ENCODE measurements at regions of chr7 and their contacts with region 1.

Region 1: DNA sequence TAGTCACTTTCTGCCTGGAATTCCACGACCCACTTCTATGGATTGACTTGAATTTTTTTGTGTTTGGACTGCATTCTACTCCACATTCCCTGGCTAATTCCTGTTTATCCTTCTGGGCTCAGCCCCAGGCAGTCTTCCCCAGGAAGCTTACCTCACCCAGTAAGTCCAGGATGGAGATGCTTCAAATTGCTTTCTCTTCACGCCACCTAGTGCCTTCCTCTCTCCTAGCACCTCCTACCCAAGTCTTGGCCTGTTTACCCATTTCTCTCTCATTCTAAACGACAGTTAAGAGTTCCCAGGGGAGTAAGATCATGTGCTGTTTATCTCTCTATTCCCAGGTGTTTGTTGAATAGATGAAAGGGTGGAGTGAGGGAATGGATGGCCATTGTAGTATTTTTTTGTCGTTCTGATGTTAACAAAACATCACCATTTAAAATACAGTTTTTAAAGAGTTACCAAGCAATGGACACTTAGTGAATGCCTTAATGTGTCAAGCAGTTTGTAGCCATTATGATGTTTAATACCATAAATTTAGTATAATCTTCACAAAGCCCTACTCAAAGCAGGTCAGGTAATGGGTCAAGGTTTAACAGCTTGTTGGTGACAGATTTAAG is 45.5 kb upstream of the TARP start:
- DNase-seq: peak; percentile 74
- H3K4me3 ChIP-seq: no peak overlapping the region
- H3K27ac ChIP-seq: no peak overlapping the region
- H3K4me1 ChIP-seq: no peaks in the 10 kb centered on the region
- H3K27me3 ChIP-seq: peaks cover 0 to 1% of the 10 kb centered on the region in 2 experiments
- CTCF ChIP-seq: peak; percentile 64 to 67
- POLR2A ChIP-seq: no peak

Region 2: DNA sequence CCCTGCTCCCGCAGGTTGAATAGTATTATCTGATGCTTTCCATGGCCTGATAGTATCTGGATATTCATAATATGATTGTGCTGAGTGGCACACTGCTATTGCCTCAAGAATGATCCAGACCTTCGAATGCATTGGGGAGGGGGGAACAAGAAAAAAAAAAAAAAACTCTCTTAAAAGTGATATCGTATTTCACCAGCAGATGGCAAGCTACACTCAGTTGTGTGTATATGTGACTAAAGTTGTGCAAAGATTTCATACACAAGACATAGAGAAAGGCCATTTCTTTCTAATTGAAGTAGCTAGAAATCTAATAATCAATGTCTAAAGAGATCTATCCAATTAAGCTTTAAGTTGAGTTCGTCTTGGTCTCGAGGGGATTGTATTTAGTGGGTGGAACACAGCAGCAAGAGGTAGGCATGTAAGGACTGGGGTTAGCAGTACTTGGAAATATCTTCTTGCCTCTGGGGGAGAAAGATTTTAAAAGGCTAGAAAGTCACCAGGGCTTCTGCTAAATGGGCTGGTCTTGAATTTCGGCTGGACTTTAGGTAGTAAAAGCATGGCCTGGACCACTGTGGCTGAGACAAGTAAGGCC is 417.6 kb before region 1 on chr7:
- CTCF ChIA-PET with region 1: interaction called, 10 read pairs
- POLR2A ChIA-PET with region 1: no interaction called
- dilution Hi-C with region 1: no loop called
- intact Hi-C with region 1: loop called (anchors 1 kb)
- DNase-seq: peak; percentile 52
- H3K4me3 ChIP-seq: no peak overlapping the region
- H3K27ac ChIP-seq: no peak overlapping the region
- H3K4me1 ChIP-seq: no peaks in the 10 kb centered on the region
- H3K27me3 ChIP-seq: no peaks in the 10 kb centered on the region
- CTCF ChIP-seq: peak; percentile 18 to 35
- POLR2A ChIP-seq: no peak

Region 3: DNA sequence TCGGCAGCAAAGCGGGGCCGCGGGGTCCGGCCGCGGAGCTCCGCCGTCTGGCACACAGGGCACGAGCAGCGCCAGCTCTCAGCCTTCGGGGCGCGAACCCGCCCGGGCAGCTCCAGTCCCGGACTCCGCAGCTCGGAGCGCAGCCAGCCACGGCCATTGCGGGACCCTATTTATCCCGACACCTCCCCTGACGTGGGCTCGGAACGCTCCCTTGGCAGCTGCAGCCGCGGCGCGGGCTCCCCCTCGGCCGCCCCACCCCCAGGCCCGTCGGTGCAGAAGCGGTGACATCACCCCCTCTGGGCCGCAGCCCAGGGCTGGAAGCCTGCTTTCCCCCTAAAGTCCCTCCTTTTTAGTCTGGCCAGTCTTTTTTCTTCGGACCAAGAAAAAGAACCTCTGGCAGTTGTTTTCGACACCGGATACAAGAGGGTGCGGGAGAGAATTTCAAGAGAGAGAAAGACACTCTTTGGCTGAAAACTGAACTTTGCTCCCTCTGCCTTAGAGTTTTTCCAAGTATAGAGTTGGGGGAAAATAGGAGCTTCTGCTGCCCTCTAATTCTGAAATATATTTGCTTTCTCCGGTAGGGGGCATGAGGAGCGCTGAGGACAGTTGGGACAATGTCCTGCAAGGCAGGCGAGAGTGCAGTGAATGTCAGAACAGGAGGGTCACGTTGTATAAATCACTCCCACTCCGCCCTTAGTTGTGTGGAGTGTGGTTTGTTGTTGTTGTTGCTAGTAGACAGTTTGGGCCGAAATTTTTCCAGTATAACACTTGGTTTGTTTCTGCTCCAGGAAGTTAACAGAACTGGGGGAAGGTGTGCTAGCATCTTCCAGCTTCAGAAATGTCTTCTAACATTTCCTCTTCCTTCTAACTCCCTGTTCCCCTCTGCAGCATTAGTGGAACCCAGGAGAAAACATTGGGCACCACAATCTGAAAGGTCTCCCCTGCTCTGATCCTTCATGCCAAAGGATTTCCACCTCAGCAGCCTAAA is 401.9 kb before region 1 on chr7 and contains the start of gene SFRP4:
- CTCF ChIA-PET with region 1: interaction called, 18 read pairs
- POLR2A ChIA-PET with region 1: no interaction called
- dilution Hi-C with region 1: no loop called
- intact Hi-C with region 1: loop called (anchors 2 kb)
- DNase-seq: peak; percentile 56
- H3K4me3 ChIP-seq: peak within 1 kb of the TSS in 1 of 3 experiments; percentile 20
- H3K27ac ChIP-seq: no peak within 1 kb of the TSS
- H3K4me1 ChIP-seq: peaks cover 4% of the 10 kb centered on the region
- H3K27me3 ChIP-seq: peaks cover 31 to 42% of the 10 kb centered on the region in 2 experiments
- CTCF ChIP-seq: peak; percentile 54 to 66
- POLR2A ChIP-seq: no peak
- total RNA-seq, gene SFRP4: not detected in 2 replicates

Region 4: GRCh38 chr7:38178004-38178694 is 140.8 kb before region 1 on chr7 and contains the start of gene STARD3NL:
- CTCF ChIA-PET with region 1: no interaction called
- POLR2A ChIA-PET with region 1: no interaction called
- dilution Hi-C with region 1: no loop called
- intact Hi-C with region 1: loop called (anchors 2 kb)
- DNase-seq: peak; percentile 100
- H3K4me3 ChIP-seq: peak within 1 kb of the TSS; percentile 78 to 88 (median 85)
- H3K27ac ChIP-seq: peak within 1 kb of the TSS; percentile 88
- H3K4me1 ChIP-seq: peaks cover 34% of the 10 kb centered on the region
- H3K27me3 ChIP-seq: peaks cover 2 to 16% of the 10 kb centered on the region in 2 experiments
- CTCF ChIP-seq: no peak
- POLR2A ChIP-seq: peak; percentile 71
- total RNA-seq, gene STARD3NL: 68.9 and 73.6 TPM in 2 replicates

Region 5: DNA sequence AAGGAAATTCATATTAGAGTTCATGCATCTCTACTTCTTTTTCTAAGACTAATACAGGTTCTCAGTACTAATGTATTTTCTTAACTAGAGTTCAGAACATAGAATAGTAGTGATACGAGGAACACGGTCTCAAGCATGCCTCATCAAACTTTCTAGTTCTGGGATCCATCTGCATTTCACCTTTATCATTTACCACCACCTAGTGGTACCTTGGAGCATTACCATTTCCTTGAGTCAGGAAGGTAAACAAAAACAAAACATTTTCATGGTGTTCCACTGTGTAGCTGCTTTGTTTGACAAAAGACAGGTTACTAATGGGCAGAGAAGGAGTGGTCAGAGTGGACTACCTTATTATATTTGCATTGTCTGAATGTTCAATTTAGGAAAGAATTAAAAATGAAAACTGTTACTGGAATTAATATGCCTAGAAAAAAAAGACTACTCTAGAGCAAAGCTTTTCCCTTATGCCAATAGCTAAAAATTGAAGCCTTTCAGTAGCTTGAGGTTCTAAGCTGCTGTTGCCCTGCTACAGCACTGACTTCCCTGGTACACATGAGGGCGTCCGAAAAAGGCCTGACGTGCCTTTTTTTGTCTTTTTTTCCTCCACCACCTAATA is 96.3 kb before region 1 on chr7:
- CTCF ChIA-PET with region 1: interaction called, 7 read pairs
- POLR2A ChIA-PET with region 1: no interaction called
- dilution Hi-C with region 1: no loop called
- intact Hi-C with region 1: loop called (anchors 2 kb)
- DNase-seq: peak; percentile 75
- H3K4me3 ChIP-seq: no peak overlapping the region
- H3K27ac ChIP-seq: no peak overlapping the region
- H3K4me1 ChIP-seq: no peaks in the 10 kb centered on the region
- H3K27me3 ChIP-seq: no peaks in the 10 kb centered on the region
- CTCF ChIP-seq: peak; percentile 47 to 63
- POLR2A ChIP-seq: no peak